ENCODE measurements at regions of chr12 and their contacts with region 1.

Region 1: DNA sequence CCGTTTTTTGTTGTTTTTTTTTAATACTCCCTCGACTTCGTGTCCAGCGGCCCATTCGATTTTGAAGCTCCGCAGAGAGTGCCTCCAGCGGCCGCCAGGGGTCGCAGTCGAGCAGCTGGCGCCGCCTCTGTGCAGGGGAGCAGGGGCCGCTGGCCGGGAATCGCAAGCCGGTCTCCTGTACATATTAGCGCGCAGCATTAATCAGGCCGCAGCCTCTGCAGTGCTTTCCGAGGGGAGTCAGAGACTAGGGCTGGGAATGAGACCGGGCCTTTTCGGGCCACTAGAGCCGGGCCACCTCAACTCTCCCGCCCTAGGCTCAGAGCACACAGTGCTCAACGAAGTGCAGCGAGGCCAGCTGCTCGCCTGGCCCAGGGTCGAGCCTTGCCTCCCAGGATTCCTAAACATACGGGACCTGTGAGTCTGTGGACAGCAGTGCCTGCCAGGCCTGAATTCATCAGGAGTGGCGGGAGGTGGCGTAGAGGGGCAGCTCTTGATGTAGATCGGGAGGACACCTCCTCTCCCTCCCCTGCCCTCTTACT is 81.8 kb downstream of the EMP1 start:
- DNase-seq: peak; percentile 65
- ATAC-seq: peak; percentile 60
- H3K4me3 ChIP-seq: no peak overlapping the region
- H3K4me3 Mint-ChIP-seq: no peak overlapping the region
- H3K27ac ChIP-seq: no peak overlapping the region
- H3K27ac Mint-ChIP-seq: no peak overlapping the region
- H3K4me1 ChIP-seq: peaks cover 4 to 5% of the 10 kb centered on the region in 2 donors
- H3K4me1 Mint-ChIP-seq: peaks cover 6% of the 10 kb centered on the region
- H3K27me3 ChIP-seq: peaks cover 0 to 38% (median 10%) of the 10 kb centered on the region in 4 experiments
- H3K27me3 Mint-ChIP-seq: peaks cover 42% of the 10 kb centered on the region
- CTCF ChIP-seq: peak; percentile 97

Region 2: DNA sequence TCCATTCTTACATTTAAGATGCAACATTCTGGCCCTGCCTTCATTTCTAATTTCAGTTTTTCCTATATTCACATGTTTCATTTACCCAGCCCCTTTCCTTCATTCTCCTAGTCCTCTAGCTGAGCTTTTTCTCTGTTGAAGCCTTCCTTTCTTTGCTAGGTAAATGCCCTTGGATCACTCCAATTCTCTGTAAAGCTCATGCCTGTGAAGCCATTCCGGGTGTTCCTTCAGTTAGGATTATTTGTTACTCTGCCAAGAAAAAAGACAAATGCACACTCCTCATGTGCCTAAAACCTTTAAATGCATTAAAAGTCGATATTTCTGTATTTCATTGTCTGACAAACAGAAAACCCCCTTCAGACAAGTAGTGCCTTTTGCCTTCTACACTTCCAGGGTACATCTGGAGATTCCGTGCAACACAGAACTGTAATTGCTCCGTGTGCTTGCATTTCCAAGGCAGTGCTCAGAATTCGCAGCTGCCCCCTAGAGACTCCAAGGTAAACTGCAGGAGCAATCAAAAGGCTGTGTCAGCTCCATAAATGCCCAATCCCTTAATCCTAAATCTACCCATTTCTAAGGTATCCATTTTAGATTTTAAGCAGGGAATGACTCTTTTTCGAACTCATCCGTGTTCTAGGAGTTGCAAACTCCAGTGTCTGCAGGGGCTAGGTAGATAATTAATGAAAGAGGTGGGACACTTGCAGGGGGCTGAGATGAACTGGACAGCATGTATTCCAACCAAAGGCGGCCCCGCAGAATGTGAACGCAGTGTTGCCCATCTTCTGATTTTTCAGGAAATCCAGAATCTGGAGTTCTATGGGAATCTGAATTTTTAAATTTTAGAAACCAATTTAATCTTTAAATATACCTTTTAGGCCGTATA is 382.9 kb after region 1 on chr12:
- CTCF ChIA-PET with region 1: interaction called, 12 read pairs
- POLR2A ChIA-PET with region 1: no interaction called
- intact Hi-C with region 1: no loop called
- DNase-seq: peak; percentile 56
- ATAC-seq: peak; percentile 51
- H3K4me3 ChIP-seq: no peak overlapping the region
- H3K4me3 Mint-ChIP-seq: no peak overlapping the region
- H3K27ac ChIP-seq: no peak overlapping the region
- H3K27ac Mint-ChIP-seq: no peak overlapping the region
- H3K4me1 ChIP-seq: peaks cover 0 to 2% of the 10 kb centered on the region in 2 donors
- H3K4me1 Mint-ChIP-seq: no peaks in the 10 kb centered on the region
- H3K27me3 ChIP-seq: peaks cover 0 to 3% (median 0%) of the 10 kb centered on the region in 4 experiments
- H3K27me3 Mint-ChIP-seq: no peaks in the 10 kb centered on the region
- CTCF ChIP-seq: peak; percentile 89